ENCODE measurements at regions of chr21 and their contacts with region 1.

Region 1: DNA sequence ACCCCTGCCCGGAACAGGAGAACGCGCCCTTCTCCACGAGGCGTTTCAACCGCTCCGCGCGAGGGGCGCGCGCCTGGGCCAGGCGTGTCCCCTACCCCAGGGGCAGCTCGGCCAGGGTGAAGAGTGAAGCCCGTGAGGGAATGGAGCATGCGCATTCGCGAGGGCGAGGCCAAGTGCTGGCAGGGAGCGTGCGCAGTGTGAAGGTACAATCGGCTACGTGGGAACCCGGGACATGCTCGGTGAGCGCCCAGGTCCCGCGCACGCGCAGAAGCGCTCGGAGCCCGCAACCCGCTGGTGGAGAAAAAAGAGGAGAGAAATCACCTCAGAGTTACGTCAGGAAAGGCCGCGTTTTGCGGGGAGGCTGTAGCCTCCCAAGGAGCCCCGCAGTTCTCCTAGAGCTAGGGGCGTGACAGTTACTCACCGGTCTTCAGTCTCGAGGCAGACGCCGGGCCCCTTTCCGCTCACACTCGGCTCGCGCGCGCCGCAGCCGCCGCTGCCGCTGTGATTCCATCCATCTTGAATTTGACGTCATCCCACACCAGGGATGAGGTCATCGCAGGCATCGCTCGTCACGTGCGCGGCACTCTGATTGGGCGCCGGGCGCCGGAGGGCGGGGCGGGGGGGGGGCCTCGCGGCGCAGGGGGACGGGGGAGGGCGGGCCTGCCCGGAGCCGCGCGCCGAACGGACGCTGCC is at the start of gene ZBTB21:
- DNase-seq: peak; percentile 99
- ATAC-seq: peak; percentile 90
- H3K4me3 Mint-ChIP-seq: peak within 1 kb of the TSS; percentile 93
- H3K27ac Mint-ChIP-seq: peak within 1 kb of the TSS; percentile 99
- H3K4me1 Mint-ChIP-seq: peaks cover 27% of the 10 kb centered on the region
- H3K27me3 Mint-ChIP-seq: no peaks in the 10 kb centered on the region
- total RNA-seq, gene ZBTB21: 30.7 to 32.9 TPM

Region 2: DNA sequence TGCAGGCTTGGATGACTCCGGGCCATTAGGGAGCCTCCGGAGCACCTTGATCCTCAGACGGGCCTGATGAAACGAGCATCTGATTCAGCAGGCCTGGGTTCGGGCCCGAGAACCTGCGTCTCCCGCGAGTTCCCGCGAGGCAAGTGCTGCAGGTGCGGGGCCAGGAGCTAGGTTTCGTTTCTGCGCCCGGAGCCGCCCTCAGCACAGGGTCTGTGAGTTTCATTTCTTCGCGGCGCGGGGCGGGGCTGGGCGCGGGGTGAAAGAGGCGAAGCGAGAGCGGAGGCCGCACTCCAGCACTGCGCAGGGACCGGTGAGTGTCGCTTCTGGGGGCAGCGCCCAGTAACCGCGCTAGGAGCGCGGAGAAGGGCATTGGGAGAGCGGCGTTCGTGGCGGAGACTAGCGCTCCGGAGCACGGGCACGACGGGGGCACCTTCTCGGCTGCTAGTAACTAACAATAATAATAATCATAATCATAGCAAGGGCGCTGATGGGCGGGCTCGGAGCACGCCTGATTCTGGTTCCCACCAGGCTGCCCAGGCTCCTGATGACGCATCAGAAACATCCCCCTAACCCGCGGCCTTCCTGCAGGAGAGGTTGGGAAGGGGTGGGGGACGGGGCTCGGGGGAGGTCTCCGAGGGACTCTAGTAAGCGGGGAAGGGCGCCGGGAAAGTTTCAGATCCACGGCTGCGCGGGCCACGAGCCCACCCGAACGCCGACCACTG is 583.9 kb before region 1 on chr21 and contains the start of gene MX1:
- CTCF ChIA-PET with region 1: no interaction called
- POLR2A ChIA-PET with region 1: no interaction called
- intact Hi-C with region 1: loop called in 1 of 2 experiments (anchors 5 kb)
- DNase-seq: peak; percentile 96
- ATAC-seq: peak; percentile 94
- H3K4me3 Mint-ChIP-seq: peak within 1 kb of the TSS; percentile 93
- H3K27ac Mint-ChIP-seq: peak within 1 kb of the TSS; percentile 98
- H3K4me1 Mint-ChIP-seq: peaks cover 54% of the 10 kb centered on the region
- H3K27me3 Mint-ChIP-seq: no peaks in the 10 kb centered on the region
- total RNA-seq, gene MX1: 162 to 169 TPM

Region 3: GRCh38 chr21:41895643-41896493 is 114.1 kb before region 1 on chr21:
- CTCF ChIA-PET with region 1: interaction called, 3 read pairs
- POLR2A ChIA-PET with region 1: no interaction called
- intact Hi-C with region 1: loop called (anchors 1 to 5 kb)
- DNase-seq: peak; percentile 60
- ATAC-seq: peak; percentile 51
- H3K4me3 Mint-ChIP-seq: no peak overlapping the region
- H3K27ac Mint-ChIP-seq: no peak overlapping the region
- H3K4me1 Mint-ChIP-seq: peaks cover 28% of the 10 kb centered on the region
- H3K27me3 Mint-ChIP-seq: no peaks in the 10 kb centered on the region

Region 4: GRCh38 chr21:41993744-41994143 is 16.2 kb before region 1 on chr21:
- CTCF ChIA-PET with region 1: no interaction called
- POLR2A ChIA-PET with region 1: interaction called, 11 read pairs
- intact Hi-C with region 1: no loop called
- DNase-seq: no peak
- ATAC-seq: no peak
- H3K4me3 Mint-ChIP-seq: no peak overlapping the region
- H3K27ac Mint-ChIP-seq: no peak overlapping the region
- H3K4me1 Mint-ChIP-seq: no peaks in the 10 kb centered on the region
- H3K27me3 Mint-ChIP-seq: no peaks in the 10 kb centered on the region

Region 5: DNA sequence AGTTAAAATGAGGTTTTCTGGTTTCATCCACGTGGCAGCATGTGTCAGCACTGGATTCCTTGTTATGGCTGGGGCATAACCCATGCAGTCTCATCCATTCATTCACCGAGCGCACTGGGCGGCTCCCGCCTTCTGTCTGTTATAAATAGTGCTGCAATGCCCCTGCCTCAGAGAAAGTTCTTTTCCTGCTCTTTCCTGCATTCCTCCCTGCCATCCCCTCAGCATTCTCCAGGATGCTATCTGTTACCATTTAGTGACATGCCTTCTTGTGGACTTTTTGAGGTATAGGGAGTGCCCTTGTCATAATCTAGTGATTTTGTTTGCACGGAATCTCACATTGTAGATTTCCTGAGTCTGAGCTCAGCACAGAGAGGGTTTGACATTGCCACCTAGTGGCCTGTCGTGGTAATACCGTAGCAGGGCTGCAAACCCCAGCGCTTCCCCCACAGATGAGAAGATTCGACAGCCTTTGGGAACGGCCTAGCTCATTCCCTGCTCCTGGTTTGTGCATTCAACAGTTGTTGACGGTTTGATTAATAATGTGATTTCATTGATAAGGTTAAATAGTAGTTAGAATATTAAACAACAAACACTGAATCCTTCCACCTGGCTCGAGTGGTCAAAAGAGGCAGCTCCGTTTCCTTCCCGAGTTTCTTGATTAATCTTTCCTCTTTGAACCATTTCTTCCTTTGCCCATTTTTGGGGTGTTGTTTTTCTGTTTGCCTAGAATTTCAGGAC is 107.4 kb after region 1 on chr21:
- CTCF ChIA-PET with region 1: interaction called, 4 read pairs
- POLR2A ChIA-PET with region 1: interaction called, 5 read pairs
- intact Hi-C with region 1: loop called in 1 of 2 experiments (anchors 5 kb)
- DNase-seq: peak; percentile 86
- ATAC-seq: peak; percentile 88
- H3K4me3 Mint-ChIP-seq: no peak overlapping the region
- H3K27ac Mint-ChIP-seq: no peak overlapping the region
- H3K4me1 Mint-ChIP-seq: peaks cover 10% of the 10 kb centered on the region
- H3K27me3 Mint-ChIP-seq: peaks cover 43% of the 10 kb centered on the region

Region 6: GRCh38 chr21:42140196-42140934 is 130.4 kb after region 1 on chr21:
- CTCF ChIA-PET with region 1: no interaction called
- POLR2A ChIA-PET with region 1: no interaction called
- intact Hi-C with region 1: no loop called
- DNase-seq: no peak
- ATAC-seq: no peak
- H3K4me3 Mint-ChIP-seq: no peak overlapping the region
- H3K27ac Mint-ChIP-seq: no peak overlapping the region
- H3K4me1 Mint-ChIP-seq: peaks cover 5% of the 10 kb centered on the region
- H3K27me3 Mint-ChIP-seq: peaks cover 2% of the 10 kb centered on the region